Heart left ventricle (tissue), 16 donors: ENCODE measurements at regions of chr9 and their contacts with region 1.

Region 1: GRCh38 chr9:21102305-21102704 is 24.6 kb upstream of the IFNB1 start:
- DNase-seq: no peak
- ATAC-seq: no peak
- H3K4me3 ChIP-seq: no peak overlapping the region
- H3K27ac ChIP-seq: no peak overlapping the region
- H3K4me1 ChIP-seq: peaks cover 0 to 19% (median under 1%) of the 10 kb centered on the region in 12 donors
- H3K27me3 ChIP-seq: no peaks in the 10 kb centered on the region
- CTCF ChIP-seq: no peak
- POLR2A ChIP-seq: no peak

Region 2: DNA sequence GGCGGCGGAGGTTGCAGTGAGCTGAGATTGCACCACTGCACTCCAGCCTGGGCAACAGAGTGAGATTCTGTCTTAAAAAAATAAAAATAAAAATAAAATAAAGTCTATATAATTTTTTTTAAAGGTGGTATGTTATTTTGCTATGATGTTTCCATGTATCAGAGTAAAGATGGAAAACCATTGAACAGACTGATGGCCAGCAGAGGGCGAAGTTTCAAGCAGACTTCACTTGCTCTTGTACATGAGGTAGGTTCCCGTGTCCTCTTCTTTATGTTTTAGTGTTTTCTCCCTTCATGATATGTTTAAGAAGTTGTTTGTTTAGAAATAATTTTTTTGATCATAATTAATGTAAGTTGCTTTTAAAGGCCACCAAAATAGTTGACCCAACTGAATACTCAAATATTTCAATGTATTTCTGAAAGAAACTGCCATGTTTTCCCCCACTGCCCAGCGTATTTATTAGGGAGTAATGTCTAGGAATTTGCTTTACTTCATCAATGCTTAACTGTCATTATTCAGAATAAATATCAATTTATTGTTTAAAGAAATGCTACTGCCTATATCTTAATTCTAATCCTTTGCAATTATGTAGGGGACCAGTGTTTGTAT is 217.2 kb before region 1 on chr9:
- intact Hi-C with region 1: loop called in 1 of 10 experiments (anchors 5 kb)
- DNase-seq: peak; percentile 26 to 49 (median 44)
- ATAC-seq: no peak
- H3K4me3 ChIP-seq: no peak overlapping the region
- H3K27ac ChIP-seq: no peak overlapping the region
- H3K4me1 ChIP-seq: no peaks in the 10 kb centered on the region
- H3K27me3 ChIP-seq: no peaks in the 10 kb centered on the region
- CTCF ChIP-seq: peak; percentile 52 to 74 (median 66)
- POLR2A ChIP-seq: no peak

Region 3: DNA sequence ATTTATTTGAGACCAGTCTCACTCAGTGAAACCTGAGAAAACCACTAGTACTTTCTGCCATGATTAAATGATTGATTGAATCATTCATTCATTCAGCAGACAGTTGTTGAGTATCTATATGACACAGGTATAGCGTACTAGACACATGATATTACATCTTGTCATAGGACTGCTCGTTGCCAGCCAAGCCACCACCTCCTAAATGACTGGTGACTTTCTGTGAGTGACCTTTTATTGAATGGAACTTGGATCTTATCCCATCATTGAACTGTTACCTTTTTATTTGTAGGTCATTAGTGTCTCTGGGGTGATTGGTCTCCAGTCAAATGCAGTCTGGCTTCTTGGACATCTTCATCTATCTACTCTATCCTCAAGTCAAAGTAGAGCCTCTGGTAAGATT is 151.6 kb before region 1 on chr9:
- intact Hi-C with region 1: loop called in 3 of 10 experiments (anchors 10 kb)
- DNase-seq: no peak
- ATAC-seq: no peak
- H3K4me3 ChIP-seq: no peak overlapping the region
- H3K27ac ChIP-seq: no peak overlapping the region
- H3K4me1 ChIP-seq: no peaks in the 10 kb centered on the region
- H3K27me3 ChIP-seq: no peaks in the 10 kb centered on the region
- CTCF ChIP-seq: no peak
- POLR2A ChIP-seq: no peak

Region 4: DNA sequence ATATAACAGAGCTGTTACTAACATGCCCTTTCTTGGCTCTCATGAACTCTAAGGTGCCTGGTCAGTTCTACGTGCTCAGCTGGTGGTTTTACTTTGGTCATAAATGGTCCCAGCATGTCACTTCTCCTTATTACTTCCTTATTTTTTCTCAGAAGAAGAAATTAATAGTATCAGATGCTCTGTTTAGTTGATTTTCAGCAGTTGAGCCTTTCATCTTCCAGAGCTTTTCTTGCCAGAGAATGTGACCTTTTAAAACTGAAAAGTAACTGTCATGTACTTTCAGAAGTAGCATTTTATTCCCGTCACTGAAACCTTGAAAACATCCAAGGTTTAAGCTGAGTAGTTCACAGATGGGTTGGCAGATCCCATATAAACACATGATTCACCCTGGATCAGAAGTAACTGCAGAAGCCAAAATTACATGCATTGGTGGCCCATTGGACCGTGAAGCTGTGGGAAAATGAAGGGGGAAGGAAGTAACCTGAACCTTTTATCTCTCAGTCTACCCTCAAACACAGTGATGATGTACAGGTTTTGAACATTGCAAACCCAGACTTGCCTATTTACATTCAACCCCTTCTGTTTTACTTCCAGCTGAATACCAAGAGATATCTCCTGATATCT is 121.4 kb before region 1 on chr9:
- intact Hi-C with region 1: loop called in 2 of 10 experiments (anchors 10 kb)
- DNase-seq: no peak
- ATAC-seq: peak; percentile 20 to 50 (median 36)
- H3K4me3 ChIP-seq: no peak overlapping the region
- H3K27ac ChIP-seq: peak overlapping the region in 3 of 12 donors; percentile 26 to 79 (median 67)
- H3K4me1 ChIP-seq: peaks cover 0 to 20% (median 4%) of the 10 kb centered on the region in 12 donors
- H3K27me3 ChIP-seq: no peaks in the 10 kb centered on the region
- CTCF ChIP-seq: no peak
- POLR2A ChIP-seq: no peak

Region 5: DNA sequence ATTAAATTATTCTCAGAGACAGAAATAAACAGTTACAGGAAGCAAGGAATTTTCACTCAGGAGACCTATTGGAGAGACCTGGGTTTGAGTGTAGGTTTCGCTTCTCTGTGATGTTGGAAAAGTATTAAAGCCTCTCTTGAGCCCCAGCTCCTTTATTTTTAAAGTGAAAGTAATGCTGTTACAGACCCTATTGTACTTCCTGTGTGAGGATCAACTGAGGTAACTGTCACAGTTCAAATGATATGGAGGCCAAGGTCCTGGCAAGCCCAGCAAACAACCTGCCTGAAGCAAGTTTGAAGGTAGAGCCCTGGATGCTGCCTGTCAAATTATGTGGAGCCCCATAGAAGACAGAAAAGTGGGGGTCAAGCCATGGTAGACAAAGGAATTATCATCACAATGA is 63.0 kb before region 1 on chr9:
- intact Hi-C with region 1: loop called in 3 of 10 experiments (anchors 5 to 10 kb)
- DNase-seq: no peak
- ATAC-seq: no peak
- H3K4me3 ChIP-seq: no peak overlapping the region
- H3K27ac ChIP-seq: no peak overlapping the region
- H3K4me1 ChIP-seq: no peaks in the 10 kb centered on the region
- H3K27me3 ChIP-seq: peaks cover 0 to 5% (median 0%) of the 10 kb centered on the region in 9 donors
- CTCF ChIP-seq: no peak
- POLR2A ChIP-seq: no peak